ENCODE measurements at regions of chr1 and their contacts with region 1.

Region 1: GRCh38 chr1:147494998-147495580 is 46.2 kb upstream of the BCL9 start:
- DNase-seq: peak; percentile 73
- ATAC-seq: peak; percentile 97

Region 2: GRCh38 chr1:147452809-147453208 is 42.3 kb before region 1 on chr1:
- intact Hi-C with region 1: no loop called
- DNase-seq: no peak
- ATAC-seq: no peak

Region 3: DNA sequence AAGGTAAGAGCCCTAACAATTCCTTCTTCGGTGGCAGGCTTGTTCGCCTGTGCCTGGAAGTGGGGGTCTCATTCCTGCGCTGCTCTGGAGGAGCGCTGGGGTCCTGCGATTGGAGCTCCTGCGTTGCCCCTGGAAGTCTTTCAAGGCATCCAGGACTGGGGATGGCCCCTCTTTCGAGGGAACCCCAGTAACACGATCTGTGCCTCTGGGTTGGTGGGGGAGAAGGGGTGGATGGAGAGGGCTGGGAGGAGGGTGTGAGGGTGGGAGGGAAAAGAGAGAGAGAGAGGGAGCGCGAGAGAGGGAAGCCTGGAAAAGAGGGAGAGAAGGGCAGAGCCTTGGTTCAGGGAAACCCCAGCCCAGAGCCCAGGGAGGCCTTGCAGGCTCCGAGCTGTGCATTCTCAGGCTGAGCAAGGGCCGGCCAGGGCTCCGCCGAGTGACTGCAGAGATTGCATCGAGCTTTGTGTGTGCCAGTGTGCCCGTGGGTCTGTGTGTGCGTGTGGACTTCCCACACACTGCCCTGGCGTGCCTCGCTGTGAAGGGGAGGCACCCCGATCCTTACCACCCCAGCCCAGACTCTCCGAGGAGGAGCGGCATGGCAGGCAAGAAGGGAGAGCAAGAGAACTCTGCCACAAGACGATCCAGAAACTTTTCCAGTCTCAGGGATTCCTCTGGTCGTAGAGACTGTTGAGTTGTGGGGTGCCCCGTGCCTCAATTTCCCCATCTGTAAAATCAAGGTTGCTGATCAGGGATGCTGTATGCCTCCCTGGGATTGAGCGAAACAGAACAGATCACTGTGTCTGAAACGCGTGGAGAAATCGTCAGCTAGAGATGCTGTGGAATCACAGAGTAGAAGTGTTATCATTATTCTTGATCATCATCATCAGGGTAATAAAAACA is 46.8 kb after region 1 on chr1:
- intact Hi-C with region 1: loop called (anchors 5 kb)
- DNase-seq: peak; percentile 66
- ATAC-seq: peak; percentile 64

Region 4: DNA sequence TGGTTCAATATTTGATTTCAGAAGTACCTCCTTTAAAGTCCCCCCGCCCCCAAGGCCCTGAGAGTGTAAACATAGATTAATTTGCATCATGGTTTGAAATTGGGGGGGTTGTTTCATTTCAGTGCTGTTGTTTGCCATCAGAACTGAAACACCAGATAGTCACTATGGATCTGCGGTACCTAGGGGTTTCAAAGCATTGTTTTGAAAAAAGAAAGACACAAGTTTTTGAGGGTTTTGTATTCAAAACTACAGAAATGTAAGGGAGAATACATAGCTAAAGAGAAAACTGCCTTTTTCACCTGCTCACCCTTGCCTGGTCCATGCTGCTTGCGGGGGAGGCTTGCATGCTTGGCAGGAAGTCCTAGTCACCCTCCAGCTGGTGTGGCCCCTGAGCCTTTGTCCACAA is 115.9 kb after region 1 on chr1:
- intact Hi-C with region 1: no loop called
- DNase-seq: no peak
- ATAC-seq: no peak

Region 5: GRCh38 chr1:147627435-147628110 is 132.5 kb after region 1 on chr1:
- intact Hi-C with region 1: loop called (anchors 2 kb)
- DNase-seq: peak; percentile 66
- ATAC-seq: peak; percentile 84

Region 6: GRCh38 chr1:147640553-147641165 is 145.6 kb after region 1 on chr1:
- intact Hi-C with region 1: loop called (anchors 5 kb)
- DNase-seq: peak; percentile 69
- ATAC-seq: peak; percentile 96

Region 7: GRCh38 chr1:147700042-147701006 is 205.2 kb after region 1 on chr1:
- intact Hi-C with region 1: loop called (anchors 10 kb)
- DNase-seq: peak; percentile 49
- ATAC-seq: peak; percentile 87

Region 8: DNA sequence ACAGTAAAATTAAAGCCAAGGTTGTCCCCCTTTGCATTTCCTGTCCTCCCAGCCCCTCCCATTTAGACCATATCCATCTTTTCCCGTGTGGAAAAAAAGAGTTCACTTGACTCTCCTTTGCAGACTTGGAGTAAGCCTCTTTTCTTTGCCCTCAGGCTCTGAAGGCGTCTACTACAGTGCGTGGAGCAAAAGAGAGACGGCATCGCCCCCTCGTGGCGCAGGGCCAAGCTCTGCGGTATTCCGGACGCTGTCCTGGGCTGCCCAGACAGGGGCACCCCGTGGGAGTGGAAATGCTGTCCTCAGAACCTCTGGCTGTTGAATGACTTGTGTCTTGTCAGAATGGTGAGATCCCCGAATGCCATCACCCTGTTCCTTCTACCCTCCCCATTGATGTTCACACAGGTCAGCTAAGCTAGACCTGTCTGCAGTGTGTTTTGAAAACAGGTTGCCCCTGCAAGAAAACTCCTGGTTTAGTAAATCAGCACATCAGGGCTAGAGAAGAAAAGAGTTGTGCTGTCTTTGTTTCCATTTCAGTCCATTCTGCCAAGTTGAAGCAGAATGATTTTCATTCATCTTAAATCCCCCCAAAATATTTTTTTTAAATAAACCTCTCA is 395.2 kb after region 1 on chr1:
- intact Hi-C with region 1: loop called (anchors 5 kb)
- DNase-seq: peak; percentile 84
- ATAC-seq: peak; percentile 92